ENCODE measurements at regions of chr5 and their contacts with region 1.

Region 1: DNA sequence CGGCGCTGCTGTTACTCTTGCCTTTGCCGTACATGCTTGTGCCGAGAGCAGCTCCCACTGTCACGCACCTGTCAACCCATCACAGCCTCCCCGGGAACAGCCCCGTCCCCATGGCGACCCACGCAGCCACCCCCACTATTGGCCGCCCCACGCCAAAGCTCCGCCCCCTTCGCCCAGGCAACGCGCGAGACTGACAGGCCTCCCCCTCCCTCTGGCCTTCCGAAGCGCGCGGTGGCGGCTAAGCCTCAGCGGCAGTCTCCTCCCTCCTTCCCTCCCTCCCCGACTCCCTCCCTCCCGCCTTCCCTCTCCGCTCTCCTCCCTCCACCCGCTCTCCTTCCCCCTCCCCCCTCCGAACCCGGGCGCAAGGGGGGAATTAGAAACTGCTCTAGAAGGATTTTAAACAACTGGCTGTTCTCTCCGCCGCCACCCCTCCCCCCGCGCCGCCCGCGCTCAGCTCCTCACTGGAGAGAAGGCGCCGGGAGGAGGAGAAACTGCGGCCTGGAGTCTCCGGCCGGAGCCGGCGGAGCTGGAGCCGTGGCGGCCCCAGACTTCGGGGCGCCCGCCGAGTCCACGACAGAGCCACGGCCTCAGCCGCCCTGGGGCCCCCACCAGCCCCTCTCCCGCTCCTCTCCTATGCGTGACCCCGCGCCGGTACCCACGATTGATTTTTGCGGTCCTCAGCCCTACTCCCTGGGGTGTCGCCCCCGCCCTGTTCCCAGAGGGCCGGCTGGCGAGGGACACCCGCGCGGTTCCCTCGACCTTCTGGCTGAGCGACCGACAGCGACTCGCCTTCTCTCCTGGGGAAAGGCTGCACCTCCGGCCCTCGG is at the start of gene SSBP2:
- DNase-seq: peak; percentile 96
- ATAC-seq: peak; percentile 89
- H3K4me3 ChIP-seq: peak within 1 kb of the TSS; percentile 50 to 62
- H3K27ac ChIP-seq: peak within 1 kb of the TSS; percentile 86
- H3K4me1 ChIP-seq: peaks cover 13 to 22% of the 10 kb centered on the region in 2 experiments
- H3K27me3 ChIP-seq: peaks cover 25% of the 10 kb centered on the region
- CTCF ChIP-seq: no peak
- POLR2A ChIP-seq: peak; percentile 38
- RAD21 ChIP-seq: peak; percentile 54
- total RNA-seq, gene SSBP2: 5.2 TPM

Region 2: GRCh38 chr5:81425569-81425968 is 325.7 kb before region 1 on chr5:
- CTCF ChIA-PET with region 1: interaction called, 4 read pairs
- POLR2A ChIA-PET with region 1: no interaction called
- RAD21 ChIA-PET with region 1: no interaction called
- intact Hi-C with region 1: loop called (anchors 5 kb)
- DNase-seq: peak; percentile 28
- ATAC-seq: peak; percentile 67; the same call in 1 of the 2 replicates
- H3K4me3 ChIP-seq: no peak overlapping the region
- H3K27ac ChIP-seq: no peak overlapping the region
- H3K4me1 ChIP-seq: peaks cover 0 to 3% of the 10 kb centered on the region in 2 experiments; a peak in 2 of 4 replicates
- H3K27me3 ChIP-seq: no peaks in the 10 kb centered on the region
- CTCF ChIP-seq: peak; percentile 39 to 64 (median 54); a peak in 4 of 6 replicates
- POLR2A ChIP-seq: no peak
- RAD21 ChIP-seq: peak; percentile 61

Region 3: GRCh38 chr5:81787474-81788242 is 36.4 kb after region 1 on chr5:
- CTCF ChIA-PET with region 1: no interaction called
- POLR2A ChIA-PET with region 1: interaction called, 3 read pairs
- RAD21 ChIA-PET with region 1: interaction called in 1 of 2 experiments, 6 read pairs
- intact Hi-C with region 1: loop called (anchors 1 kb)
- DNase-seq: no peak
- ATAC-seq: no peak
- H3K4me3 ChIP-seq: no peak overlapping the region
- H3K27ac ChIP-seq: no peak overlapping the region
- H3K4me1 ChIP-seq: peaks cover 9% of the 10 kb centered on the region in 2 experiments
- H3K27me3 ChIP-seq: no peaks in the 10 kb centered on the region
- CTCF ChIP-seq: no peak
- POLR2A ChIP-seq: no peak
- RAD21 ChIP-seq: no peak

Region 4: DNA sequence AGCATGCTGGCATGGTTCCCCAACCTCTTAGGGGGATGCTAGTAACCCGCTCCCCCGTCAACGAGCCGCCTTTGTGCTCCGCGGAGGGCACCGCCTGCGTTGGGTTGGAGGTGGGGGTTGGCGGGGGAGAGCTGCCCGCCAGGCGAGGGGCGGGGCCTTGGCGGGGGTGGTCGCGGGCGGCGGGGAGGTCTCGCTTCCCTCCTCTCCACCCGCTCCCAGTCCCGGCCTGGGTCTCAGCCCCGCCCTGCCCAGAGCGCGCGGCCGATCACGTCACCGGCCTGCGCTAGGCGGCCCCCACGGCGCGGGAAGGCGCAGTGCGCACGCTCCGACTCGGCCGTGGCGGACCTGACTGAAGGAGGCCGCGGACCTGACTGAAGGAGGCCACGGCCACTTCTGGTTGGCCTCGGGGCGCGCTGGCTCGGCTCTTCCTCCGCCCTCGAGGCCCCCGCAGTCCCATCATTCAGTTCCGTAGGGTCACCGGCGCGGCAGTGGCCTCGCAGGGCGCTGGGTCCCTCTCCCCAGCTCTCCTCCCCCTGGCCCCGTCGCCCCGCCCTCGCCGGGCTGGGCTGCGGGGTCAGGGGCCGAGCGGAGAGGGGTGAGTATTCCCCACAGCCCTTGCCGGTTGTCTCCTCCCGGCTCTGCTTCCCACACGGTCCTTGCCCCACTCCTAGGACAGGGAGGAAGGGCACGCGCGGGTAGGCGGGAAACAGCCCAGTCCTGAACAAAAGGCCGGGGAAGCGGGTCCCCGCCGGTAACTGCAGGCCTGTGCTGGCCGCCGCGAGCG is 220.7 kb after region 1 on chr5 and contains the start of gene ATG10:
- CTCF ChIA-PET with region 1: no interaction called
- POLR2A ChIA-PET with region 1: no interaction called
- RAD21 ChIA-PET with region 1: no interaction called
- intact Hi-C with region 1: loop called (anchors 10 kb)
- DNase-seq: peak; percentile 68
- ATAC-seq: peak; percentile 96
- H3K4me3 ChIP-seq: peak within 1 kb of the TSS; percentile 76 to 83
- H3K27ac ChIP-seq: peak within 1 kb of the TSS; percentile 83
- H3K4me1 ChIP-seq: peaks cover 2 to 20% of the 10 kb centered on the region in 2 experiments; a peak in 3 of 4 replicates
- H3K27me3 ChIP-seq: no peaks in the 10 kb centered on the region
- CTCF ChIP-seq: no peak
- POLR2A ChIP-seq: peak; percentile 45
- RAD21 ChIP-seq: no peak
- total RNA-seq, gene ATG10: 9.4 TPM

Region 5: GRCh38 chr5:82265047-82265446 is 513.8 kb after region 1 on chr5:
- CTCF ChIA-PET with region 1: no interaction called
- POLR2A ChIA-PET with region 1: no interaction called
- RAD21 ChIA-PET with region 1: no interaction called
- intact Hi-C with region 1: no loop called
- DNase-seq: no peak
- ATAC-seq: no peak
- H3K4me3 ChIP-seq: no peak overlapping the region
- H3K27ac ChIP-seq: no peak overlapping the region
- H3K4me1 ChIP-seq: no peaks in the 10 kb centered on the region
- H3K27me3 ChIP-seq: no peaks in the 10 kb centered on the region
- CTCF ChIP-seq: no peak
- POLR2A ChIP-seq: no peak
- RAD21 ChIP-seq: no peak

Region 6: GRCh38 chr5:82278095-82278918 is 527.1 kb after region 1 on chr5 and contains the start of gene RPS23:
- CTCF ChIA-PET with region 1: no interaction called
- POLR2A ChIA-PET with region 1: no interaction called
- RAD21 ChIA-PET with region 1: no interaction called
- intact Hi-C with region 1: loop called (anchors 1 kb)
- DNase-seq: peak; percentile 84
- ATAC-seq: peak; percentile 86
- H3K4me3 ChIP-seq: peak within 1 kb of the TSS; percentile 93 to 94
- H3K27ac ChIP-seq: peak within 1 kb of the TSS; percentile 74
- H3K4me1 ChIP-seq: peaks cover 4 to 23% of the 10 kb centered on the region in 2 experiments; a peak in 3 of 4 replicates
- H3K27me3 ChIP-seq: no peaks in the 10 kb centered on the region
- CTCF ChIP-seq: no peak
- POLR2A ChIP-seq: peak; percentile 91
- RAD21 ChIP-seq: no peak
- total RNA-seq, gene RPS23: 2,206 TPM

Measured in HCT116 (cell line).